PC-3 (cell line): ENCODE measurements at regions of chr6 and their contacts with region 1.

Region 1: DNA sequence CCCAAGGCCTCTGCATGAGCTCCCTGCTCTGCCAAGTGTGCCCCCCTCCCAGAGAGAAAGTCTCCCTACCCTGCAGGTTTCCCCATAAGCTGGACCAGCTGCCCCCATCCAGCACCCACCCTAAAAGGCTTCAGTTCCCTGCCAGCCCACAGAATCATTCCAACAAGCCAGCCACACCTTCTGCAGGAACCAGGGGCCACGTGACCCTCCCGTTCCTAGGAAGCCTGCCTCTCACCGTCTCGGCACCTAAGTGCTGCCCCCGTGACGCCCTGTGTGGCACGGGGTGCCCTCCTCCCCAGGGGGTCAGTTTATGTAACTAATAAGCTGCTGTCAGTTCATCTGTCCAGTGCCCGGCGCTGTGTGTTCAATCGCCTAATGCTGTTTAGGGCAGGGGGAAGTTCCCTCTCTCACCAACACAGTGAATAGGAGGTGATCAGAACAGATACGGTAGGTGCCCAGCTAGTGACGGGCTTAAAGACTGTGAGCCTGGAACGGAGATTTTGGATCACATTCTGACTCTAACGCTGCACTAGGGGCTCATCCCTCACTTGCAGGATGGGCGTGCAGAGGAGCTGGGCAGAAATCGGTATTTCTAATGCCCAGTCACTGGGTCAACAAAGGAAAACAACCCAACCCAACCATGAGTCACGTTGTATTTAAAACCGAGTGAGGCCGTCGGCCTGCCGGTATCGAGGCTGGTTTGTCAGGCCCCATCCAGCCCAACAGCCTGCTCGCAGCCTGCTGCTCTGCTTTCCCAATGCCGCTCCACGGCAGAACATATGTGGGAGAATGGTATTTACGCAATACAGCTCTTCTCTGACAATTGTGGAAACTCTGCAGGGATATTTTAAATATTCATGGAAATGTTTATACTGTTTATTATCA is 56.0 kb downstream of the RAMACL start:
- DNase-seq: peak; percentile 91
- ATAC-seq: peak; percentile 86
- H3K4me3 ChIP-seq: peak overlapping the region; percentile 59
- H3K27ac ChIP-seq: peak overlapping the region; percentile 100
- H3K4me1 ChIP-seq: peaks cover 39% of the 10 kb centered on the region
- H3K27me3 ChIP-seq: no peaks in the 10 kb centered on the region
- CTCF ChIP-seq: no peak

Region 2: GRCh38 chr6:166515072-166515810 is 15.2 kb before region 1 on chr6:
- CTCF ChIA-PET with region 1: interaction called, 3 read pairs
- POLR2A ChIA-PET with region 1: no interaction called
- intact Hi-C with region 1: loop called (anchors 1 kb)
- DNase-seq: peak; percentile 88
- ATAC-seq: peak; percentile 96
- H3K4me3 ChIP-seq: no peak overlapping the region
- H3K27ac ChIP-seq: no peak overlapping the region
- H3K4me1 ChIP-seq: peaks cover 8% of the 10 kb centered on the region
- H3K27me3 ChIP-seq: no peaks in the 10 kb centered on the region
- CTCF ChIP-seq: peak; percentile 66

Region 3: DNA sequence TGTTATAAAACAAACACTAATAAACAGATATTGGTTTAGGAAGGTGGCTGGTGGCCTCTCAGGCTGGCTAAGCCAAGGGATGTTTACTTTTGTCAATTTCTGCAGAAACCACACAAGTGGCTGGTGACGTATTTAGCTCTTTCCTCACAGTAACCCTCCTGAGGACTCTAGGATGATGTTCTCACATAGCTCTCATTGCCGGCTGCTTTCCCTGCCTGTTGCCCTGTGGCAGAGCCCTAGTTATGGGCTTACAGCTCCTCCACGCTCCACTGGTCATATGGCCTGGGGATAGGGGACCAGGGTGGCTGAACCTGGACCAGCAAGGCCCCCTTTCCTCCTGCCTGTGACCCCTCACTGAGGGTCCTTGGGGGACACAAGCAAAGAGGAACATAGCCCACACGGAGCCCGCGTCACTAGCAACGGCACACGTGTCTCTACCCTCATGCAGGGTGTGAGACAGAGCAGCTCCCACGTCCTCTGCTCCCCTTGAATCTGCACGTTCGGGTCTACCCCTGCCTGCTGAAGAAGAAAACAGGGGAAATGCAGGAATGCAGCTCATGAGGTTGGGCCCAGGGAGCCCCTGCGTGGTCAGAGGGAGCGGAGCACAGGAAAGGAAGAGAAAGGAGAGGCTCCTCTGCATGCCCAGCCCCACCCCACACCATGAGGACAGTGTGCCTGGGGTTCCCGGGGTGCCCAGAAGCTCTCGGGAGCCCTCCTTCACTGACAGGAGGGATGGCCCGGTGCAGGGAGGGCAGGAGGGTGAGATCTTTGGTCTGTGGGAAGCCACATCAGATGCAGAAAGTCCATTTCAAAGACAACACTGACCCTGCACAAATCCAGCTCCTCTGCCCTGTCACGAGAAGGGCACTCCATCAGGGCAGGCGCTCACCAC is 42.2 kb after region 1 on chr6:
- CTCF ChIA-PET with region 1: no interaction called
- POLR2A ChIA-PET with region 1: no interaction called
- intact Hi-C with region 1: loop called (anchors 5 kb)
- DNase-seq: peak; percentile 58
- ATAC-seq: peak; percentile 93
- H3K4me3 ChIP-seq: no peak overlapping the region
- H3K27ac ChIP-seq: peak overlapping the region; percentile 51
- H3K4me1 ChIP-seq: peaks cover 15% of the 10 kb centered on the region
- H3K27me3 ChIP-seq: no peaks in the 10 kb centered on the region
- CTCF ChIP-seq: no peak